Endothelial cell of umbilical vein (primary cell): ENCODE measurements at regions of chr12 and their contacts with region 1.

Region 1: DNA sequence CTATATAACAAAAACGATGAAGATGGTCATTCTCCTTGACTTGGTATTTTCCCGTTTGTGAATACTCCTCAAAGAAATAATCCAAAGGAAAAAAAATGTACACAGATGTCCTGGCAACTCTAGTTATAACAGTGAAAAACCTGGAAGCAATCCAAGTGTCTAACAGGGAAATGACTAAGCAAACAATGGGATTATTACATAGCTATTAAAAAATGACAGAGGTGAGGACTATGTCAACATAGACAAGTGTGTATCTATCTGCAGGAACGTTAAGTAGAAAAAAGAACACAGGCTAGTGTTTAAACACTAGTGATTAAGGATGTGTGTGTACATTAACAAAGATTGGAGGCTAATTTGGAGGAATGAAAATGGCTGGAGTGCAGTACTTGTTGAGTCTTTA is 5.9 kb upstream of the APOLD1 start:
- DNase-seq: peak; percentile 95
- H3K4me3 ChIP-seq: no peak overlapping the region
- H3K27ac ChIP-seq: peak overlapping the region; percentile 88
- H3K4me1 ChIP-seq: peaks cover 36% of the 10 kb centered on the region
- H3K27me3 ChIP-seq: no peaks in the 10 kb centered on the region
- CTCF ChIP-seq: no peak
- POLR2A ChIP-seq: peak; percentile 35

Region 2: GRCh38 chr12:12486661-12487240 is 292.8 kb before region 1 on chr12:
- CTCF ChIA-PET with region 1: no interaction called
- POLR2A ChIA-PET with region 1: no interaction called
- dilution Hi-C with region 1: no loop called
- intact Hi-C with region 1: no loop called
- DNase-seq: no peak
- H3K4me3 ChIP-seq: no peak overlapping the region
- H3K27ac ChIP-seq: no peak overlapping the region
- H3K4me1 ChIP-seq: peaks cover 10% of the 10 kb centered on the region
- H3K27me3 ChIP-seq: no peaks in the 10 kb centered on the region
- CTCF ChIP-seq: no peak
- POLR2A ChIP-seq: no peak

Region 3: GRCh38 chr12:12757121-12757520 is 22.4 kb before region 1 on chr12:
- CTCF ChIA-PET with region 1: interaction called, 6 read pairs
- POLR2A ChIA-PET with region 1: no interaction called
- dilution Hi-C with region 1: no loop called
- intact Hi-C with region 1: loop called (anchors 1 kb)
- DNase-seq: no peak
- H3K4me3 ChIP-seq: no peak overlapping the region
- H3K27ac ChIP-seq: no peak overlapping the region
- H3K4me1 ChIP-seq: peaks cover 16% of the 10 kb centered on the region
- H3K27me3 ChIP-seq: no peaks in the 10 kb centered on the region
- CTCF ChIP-seq: no peak
- POLR2A ChIP-seq: no peak